ACHN (cell line): ENCODE measurements at regions of chr2 and their contacts with region 1.

Region 1: GRCh38 chr2:207474863-207475485 is 54.8 kb upstream of the CREB1 start:
- DNase-seq: peak; percentile 64

Region 2: DNA sequence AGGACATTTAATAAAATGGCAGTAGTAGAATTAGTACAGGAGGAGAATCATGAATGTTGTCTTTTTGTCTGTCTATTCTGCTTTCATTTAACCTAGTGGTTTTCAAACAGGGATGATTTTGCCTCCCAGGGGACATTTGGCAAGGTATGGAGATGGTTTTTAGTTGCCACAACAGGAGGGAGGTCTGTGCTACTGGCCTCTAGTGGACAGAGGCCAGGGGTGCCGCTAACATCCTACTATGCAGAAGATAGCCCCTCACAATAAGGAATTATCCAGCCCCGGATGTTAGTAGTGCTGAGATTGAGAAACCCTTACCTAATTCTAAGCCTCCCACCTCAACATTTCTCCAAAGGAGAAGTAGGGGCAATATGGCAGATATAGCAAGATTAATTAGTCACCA is 691.3 kb before region 1 on chr2:
- in situ Hi-C with region 1: loop called (anchors 25 kb)
- DNase-seq: peak; percentile 35

Region 3: GRCh38 chr2:207655000-207655399 is 180.0 kb after region 1 on chr2:
- in situ Hi-C with region 1: no loop called
- DNase-seq: no peak

Region 4: DNA sequence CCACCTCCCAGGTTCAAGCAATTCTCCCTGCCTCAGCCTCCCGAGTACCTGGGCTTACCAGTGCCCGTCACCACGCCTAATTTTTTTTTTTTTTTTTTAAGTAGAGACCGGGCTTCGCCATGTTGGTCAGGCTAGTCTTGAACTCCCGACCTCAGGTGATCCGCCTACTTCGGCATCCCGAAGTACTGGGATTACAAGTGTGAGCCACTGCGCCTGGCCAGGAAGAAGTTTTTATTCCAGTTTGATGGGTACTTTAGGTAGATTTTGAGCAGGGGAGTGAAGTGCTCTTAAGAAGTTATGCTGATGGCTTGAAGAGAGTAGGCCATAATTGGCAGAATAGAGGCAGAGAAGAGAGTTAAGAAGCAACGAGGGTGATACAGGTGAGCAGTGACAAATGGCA is 269.5 kb after region 1 on chr2:
- in situ Hi-C with region 1: no loop called
- DNase-seq: no peak